ENCODE measurements at regions of chr2 and their contacts with region 1.

Region 1: GRCh38 chr2:229921892-229922445 is at the start of gene TRIP12:
- DNase-seq: peak; percentile 91
- CTCF ChIP-seq: no peak

Region 2: DNA sequence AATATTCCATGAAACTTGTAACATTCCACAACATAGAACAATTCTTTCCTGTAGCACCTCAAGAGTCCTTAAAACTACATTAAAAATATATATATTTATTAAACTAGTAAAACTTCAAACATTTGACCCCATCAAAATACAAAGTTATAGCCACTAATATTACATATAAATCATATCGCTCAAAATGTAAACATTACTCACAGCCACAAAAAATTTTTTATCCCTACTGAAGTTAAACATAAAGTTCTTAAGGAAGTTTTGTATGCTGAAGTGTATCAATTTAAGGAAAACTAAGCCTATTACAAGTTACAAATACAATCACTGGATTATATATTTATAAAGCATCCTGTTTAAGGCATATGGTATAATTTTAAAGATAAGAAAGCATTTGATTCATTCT is 127.3 kb before region 1 on chr2:
- CTCF ChIA-PET with region 1: no interaction called
- POLR2A ChIA-PET with region 1: no interaction called
- DNase-seq: no peak
- CTCF ChIP-seq: no peak

Region 3: GRCh38 chr2:229901819-229902218 is 20.1 kb before region 1 on chr2:
- CTCF ChIA-PET with region 1: interaction called, 6 read pairs
- POLR2A ChIA-PET with region 1: interaction called, 11 read pairs
- DNase-seq: no peak
- CTCF ChIP-seq: no peak

Region 4: DNA sequence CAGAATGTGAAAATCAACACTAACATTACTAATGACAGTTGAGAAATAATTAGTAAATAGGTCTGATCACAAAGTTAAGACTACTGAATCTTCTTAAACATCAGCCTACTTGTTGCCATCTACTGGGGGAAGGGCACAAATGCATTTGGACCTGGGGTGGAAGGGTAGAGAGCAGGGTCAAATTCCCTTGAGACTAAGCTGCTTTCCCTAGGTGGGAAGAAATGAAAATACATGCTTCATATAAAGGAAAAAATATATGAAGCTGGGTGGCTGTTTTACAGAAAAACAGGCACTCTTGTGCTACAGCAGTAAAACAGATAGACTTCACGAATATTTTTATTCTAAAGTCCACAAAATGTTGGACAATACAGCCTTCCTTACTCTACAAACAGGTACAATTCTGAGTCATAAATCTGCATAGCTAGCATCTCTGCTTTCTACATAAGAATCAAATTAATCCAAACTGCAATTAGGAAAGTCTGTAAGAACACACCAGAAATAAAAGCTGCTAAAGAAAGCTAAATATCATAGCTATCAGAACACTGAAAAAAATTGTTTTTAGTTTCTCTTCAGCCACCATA is 11.0 kb before region 1 on chr2:
- CTCF ChIA-PET with region 1: interaction called, 22 read pairs
- POLR2A ChIA-PET with region 1: interaction called, 4 read pairs
- DNase-seq: peak; percentile 45
- CTCF ChIP-seq: peak; percentile 58

Region 5: GRCh38 chr2:229947544-229947943 is 25.6 kb after region 1 on chr2:
- CTCF ChIA-PET with region 1: no interaction called
- POLR2A ChIA-PET with region 1: no interaction called
- DNase-seq: peak; percentile 32
- CTCF ChIP-seq: no peak

Measured in GM10248 (cell line).